ENCODE measurements at regions of chr11 and their contacts with region 1.

Region 1: DNA sequence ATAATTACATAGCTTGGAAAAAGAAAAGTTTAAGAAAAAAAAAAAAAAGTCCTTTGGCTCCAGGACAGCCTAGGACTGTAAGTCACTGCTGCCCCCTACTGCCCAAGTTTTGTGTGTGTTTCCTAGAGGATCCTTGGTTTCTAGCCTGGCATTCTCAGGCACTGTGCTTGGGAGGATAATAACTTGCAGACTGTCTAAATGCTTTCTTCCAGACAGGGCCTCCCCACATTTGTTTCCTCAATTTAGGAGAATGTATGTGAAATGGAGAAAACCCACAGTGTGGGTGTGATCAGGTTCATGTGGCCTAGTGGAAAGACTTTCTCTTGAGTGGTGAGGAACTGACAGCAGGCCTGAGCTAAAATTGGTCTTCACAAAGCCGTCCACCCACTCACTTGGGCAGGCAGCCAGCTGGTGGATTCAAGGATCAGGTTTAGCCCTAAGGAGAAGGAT is 191.0 kb downstream of the NAV2 start:
- DNase-seq: peak; percentile 39
- ATAC-seq: peak; percentile 92
- H3K4me3 ChIP-seq: no peak overlapping the region
- H3K27ac ChIP-seq: no peak overlapping the region
- H3K4me1 ChIP-seq: no peaks in the 10 kb centered on the region
- H3K27me3 ChIP-seq: no peaks in the 10 kb centered on the region
- CTCF ChIP-seq: peak; percentile 88

Region 2: DNA sequence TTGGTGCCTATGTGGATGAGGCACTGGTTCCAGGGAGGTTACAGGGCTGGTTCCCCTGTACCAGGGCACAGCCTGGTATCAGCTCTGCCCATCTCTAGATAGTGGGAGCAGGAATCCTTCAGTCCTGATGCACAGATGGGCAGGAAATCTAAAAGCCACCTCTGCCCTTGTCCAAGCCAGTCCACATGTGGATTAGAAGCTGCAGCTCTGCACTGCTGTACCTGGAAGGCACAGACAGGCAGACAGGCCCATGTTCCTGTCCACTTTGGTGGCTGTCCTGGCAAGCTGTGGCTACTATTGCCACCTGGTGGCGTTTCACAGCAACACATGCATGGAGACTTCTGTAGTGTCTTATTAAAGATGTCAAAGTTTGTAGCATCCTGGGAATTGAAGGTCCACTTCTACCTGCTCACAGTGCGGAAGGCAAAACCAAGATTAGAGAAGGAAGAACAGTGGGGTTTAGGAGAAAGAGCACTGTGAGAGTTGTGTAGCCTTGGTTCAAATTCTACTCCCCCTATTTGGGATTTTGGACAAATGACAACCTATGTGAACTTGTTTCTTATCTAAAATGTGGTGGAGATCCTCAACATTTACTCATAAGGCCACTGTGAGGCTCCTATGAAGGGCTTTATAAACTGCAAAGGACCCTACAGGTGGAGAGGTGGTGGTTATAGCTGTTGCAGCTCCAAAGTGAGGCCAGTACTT is 160.9 kb before region 1 on chr11:
- CTCF ChIA-PET with region 1: interaction called, 3 read pairs
- POLR2A ChIA-PET with region 1: no interaction called
- in situ Hi-C with region 1: no loop called
- intact Hi-C with region 1: loop called (anchors 5 kb)
- DNase-seq: peak; percentile 46
- ATAC-seq: peak; percentile 93
- H3K4me3 ChIP-seq: no peak overlapping the region
- H3K27ac ChIP-seq: no peak overlapping the region
- H3K4me1 ChIP-seq: no peaks in the 10 kb centered on the region
- H3K27me3 ChIP-seq: no peaks in the 10 kb centered on the region
- CTCF ChIP-seq: peak; percentile 86

Region 3: DNA sequence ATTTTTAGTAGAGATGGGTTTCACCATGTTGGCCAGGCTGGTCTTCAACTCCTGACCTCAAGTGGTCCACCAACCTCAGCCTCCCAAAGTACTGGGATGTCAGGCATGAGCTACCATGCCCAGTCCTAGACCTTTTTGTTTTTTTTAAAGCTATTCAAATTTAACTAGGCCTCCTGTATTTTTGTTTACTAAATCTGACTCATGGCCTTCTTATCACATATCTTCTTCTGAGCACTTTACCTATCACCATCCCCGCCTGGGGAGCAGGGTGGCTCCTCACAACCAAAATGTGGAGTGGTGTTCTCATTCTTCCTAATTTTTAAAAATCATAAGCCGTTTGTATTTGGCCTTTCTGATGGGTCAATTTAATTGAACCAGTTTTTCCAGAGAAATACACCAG is 164.0 kb after region 1 on chr11:
- CTCF ChIA-PET with region 1: no interaction called
- POLR2A ChIA-PET with region 1: interaction called, 17 read pairs
- in situ Hi-C with region 1: no loop called
- intact Hi-C with region 1: no loop called
- DNase-seq: no peak
- ATAC-seq: no peak
- H3K4me3 ChIP-seq: no peak overlapping the region
- H3K27ac ChIP-seq: no peak overlapping the region
- H3K4me1 ChIP-seq: peaks cover 10% of the 10 kb centered on the region; the same call in 1 of the 2 replicates
- H3K27me3 ChIP-seq: no peaks in the 10 kb centered on the region
- CTCF ChIP-seq: no peak